ENCODE measurements at regions of chr10 and their contacts with region 1.

Region 1: DNA sequence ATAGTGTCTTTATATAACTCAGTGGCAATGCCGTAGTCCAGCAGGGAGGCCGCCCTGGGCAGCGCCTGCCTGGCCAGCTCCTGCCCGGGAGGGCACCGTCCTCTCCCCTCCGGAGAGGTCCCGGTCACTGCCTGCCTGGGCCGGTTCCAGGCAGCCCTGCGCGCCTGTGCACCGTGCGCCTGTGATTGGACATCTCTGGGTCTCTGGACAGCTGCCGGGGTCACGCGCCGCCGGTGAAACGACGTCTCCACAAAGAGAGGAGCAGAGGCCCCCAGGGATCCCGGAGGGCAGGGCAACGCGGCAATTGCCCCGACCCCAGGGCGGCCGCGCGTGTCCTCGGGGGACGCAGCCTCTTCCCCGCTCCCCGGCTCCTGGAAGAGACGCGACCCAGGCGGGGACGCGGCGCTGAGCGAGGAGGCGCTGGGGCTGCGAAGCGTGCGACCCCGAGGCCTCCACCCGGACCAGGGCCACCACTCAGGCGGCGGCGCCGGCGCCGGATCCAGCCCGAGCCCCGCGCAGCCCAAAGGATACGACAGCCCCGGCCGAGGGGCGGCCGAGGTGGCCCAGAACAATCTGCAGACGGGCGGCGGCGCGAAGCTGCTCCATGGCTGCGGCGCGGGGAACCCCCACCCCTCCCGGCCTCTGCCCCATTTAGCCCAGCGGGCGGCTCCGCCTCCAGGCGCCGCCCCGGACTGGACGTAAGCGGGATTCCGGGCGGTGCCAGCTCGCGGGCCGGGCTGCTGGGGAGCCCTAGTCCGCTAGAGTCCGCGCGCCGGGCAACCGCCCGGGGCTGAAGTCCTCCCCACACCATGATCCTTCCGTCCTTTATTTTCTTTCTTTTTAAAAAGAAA is at the start of gene PHYH:
- DNase-seq: peak; percentile 96
- ATAC-seq: peak; percentile 94
- total RNA-seq, gene PHYH: 177 TPM

Region 2: GRCh38 chr10:13115832-13116803 is 183.5 kb before region 1 on chr10:
- intact Hi-C with region 1: no loop called
- DNase-seq: no peak
- ATAC-seq: peak; percentile 79

Region 3: DNA sequence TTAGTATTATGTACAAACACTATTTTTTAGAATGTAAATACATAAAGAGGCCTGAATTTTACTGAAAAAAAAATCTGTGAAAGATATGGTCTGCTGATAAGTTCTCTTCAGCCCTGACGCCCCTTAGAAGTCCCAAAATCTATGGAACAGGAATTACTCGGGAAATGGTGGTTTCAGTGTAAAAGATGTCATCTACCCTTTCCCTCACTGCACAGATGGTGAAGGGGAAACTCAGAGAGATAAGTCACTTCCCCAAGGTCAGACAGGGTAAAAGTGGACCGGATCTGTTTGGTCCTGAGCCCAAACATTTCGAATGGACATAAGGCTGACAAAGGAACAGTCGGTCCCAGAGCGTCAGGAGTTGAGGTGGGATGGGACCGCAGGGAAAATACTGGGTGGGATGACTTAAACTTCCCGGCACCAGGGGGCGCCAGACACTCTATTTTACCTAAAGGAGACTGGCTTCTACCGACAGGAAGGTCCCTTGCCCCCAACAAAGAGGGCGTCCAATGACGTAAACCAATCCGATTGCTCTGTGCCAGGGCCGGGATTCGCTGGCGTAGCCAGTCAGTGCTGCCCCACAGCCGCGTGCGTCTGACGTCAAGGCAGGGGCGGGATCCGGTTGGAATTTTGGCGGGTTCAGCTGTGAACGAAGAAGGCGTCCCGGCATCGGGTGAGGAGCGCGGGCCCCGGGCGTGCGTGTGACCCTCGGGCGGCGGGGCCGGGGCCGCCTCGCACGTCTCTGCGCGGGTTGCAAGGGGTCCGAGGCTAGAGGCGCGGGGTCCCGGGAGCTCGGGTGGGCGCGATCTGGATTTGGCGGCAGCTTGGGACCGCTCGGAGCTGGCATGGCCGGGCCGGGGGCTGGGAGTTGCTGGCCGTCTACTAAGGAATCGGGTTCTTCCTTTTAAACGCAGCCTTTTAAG is 138.5 kb before region 1 on chr10 and contains the start of gene MCM10:
- intact Hi-C with region 1: loop called (anchors 5 kb)
- DNase-seq: peak; percentile 97
- ATAC-seq: peak; percentile 100
- total RNA-seq, gene MCM10: 0.30 TPM

Region 4: DNA sequence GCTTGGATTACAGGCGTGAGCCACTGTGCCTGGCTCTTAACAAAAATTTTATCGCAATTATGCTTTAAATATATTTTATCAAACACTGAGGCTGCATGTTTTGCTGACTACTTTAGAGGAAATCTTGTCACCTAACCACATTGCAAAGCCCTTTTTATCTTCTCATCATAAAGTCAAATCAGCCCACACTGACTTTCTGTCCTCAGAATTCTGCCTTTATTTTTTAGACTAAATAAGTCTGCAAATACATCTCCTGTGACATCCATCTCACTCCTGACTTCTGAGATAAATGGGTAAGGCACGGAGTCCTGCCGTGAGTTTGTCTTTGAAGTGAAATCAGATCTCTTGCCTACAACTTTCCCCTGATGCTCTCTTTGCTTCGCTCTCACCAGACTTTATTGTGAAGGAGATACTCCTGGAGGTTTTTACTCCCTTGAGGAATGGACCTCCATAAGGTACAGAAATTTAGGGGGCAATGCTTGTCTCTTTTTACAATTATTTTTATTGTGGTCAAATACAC is 42.0 kb before region 1 on chr10:
- intact Hi-C with region 1: no loop called
- DNase-seq: no peak
- ATAC-seq: no peak